ENCODE measurements at regions of chr15 and their contacts with region 1.

Region 1: DNA sequence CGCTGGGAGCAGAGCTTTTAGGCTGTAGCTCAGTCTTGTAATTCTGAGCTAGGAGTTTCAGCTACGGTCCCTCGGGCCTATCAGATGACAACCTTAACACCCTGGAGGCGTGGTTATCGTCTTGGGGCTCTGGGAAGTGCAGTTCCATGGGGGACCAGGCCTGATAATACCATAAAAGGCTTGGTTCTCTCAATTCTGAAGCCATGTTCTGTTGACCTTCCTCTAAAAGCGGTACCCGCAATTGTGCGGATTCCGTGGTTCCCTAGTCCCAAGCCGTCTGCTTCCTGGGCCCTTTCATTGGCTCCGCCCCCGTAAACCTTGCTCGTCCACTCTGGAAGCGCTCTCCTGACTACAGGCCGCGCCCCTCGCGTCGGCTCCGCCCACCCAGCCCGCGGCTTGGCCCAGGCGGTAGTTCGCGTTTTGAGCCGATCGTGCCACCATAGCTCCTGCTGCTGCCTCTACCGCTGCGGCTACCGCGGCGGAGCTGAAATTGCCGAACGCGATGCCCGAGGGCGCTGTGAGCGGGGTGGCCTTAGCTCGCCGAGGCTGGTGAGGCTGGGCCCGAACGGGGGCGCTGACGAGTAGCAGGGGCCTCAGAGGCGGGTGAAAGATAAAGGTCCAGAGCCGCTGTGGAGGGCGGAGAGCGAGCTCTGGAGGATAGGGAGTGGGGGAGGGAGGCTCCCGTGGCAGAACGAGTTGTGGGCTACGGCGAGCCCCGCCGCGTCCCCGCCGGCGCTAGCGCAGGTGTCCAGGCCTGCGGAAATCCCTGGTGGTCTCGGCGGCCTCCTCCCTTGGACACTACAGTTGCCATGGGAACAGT is at the start of gene MAPKBP1:
- DNase-seq: peak; percentile 96 to 99 (median 98)
- ATAC-seq: peak; percentile 97
- H3K4me3 ChIP-seq: peak within 1 kb of the TSS; percentile 93
- H3K4me3 Mint-ChIP-seq: peak within 1 kb of the TSS; percentile 86 to 97 (median 95)
- H3K27ac ChIP-seq: peak within 1 kb of the TSS; percentile 73
- H3K27ac Mint-ChIP-seq: peak within 1 kb of the TSS; percentile 88 to 97 (median 94)
- H3K4me1 ChIP-seq: peaks cover 36% of the 10 kb centered on the region in 2 donors
- H3K4me1 Mint-ChIP-seq: peaks cover 33 to 65% (median 59%) of the 10 kb centered on the region in 7 donors
- H3K27me3 ChIP-seq: no peaks in the 10 kb centered on the region
- H3K27me3 Mint-ChIP-seq: no peaks in the 10 kb centered on the region
- total RNA-seq, gene MAPKBP1: 36.5 to 44.7 (median 41.1) TPM

Region 2: DNA sequence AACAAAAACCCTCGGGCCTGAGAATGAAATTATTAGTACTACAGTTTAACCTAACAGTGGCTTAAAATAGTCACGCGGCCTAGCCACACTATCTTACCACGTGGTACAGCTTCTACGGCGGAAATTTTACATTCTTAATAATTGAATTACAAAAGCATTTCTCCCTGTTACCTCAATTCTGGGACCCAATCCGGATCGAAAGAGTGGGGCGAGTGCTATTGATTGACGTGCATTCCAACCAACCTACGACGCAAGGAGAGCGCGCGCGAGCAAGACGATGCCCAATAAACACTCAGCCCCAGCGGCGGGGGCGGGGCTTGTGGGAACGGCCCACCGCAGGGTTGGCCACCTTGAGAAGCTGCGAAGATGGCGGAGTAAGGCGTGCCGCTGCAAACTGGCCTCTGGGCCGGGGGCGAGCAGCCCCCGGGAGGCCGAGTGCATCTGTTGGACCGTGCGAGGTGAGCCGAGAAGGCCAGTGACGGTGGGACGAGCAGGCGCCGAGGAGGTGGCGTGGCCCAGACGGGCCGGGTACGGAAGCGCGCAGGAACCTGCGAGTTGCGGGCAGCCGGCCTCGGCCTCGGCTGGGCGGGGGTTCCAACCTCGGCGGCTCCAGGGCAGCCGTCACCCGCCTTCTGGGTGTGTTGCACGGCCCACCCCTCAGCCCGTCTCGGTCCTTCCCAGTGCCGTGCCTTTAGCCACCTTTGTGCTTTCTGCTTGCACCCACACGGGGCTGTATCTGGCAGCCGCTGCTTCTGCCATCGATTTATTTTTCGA is 490.4 kb before region 1 on chr15:
- CTCF ChIA-PET with region 1: interaction called, 3 read pairs
- POLR2A ChIA-PET with region 1: no interaction called
- intact Hi-C with region 1: loop called in 1 of 2 experiments (anchors 5 kb)
- DNase-seq: peak; percentile 94 to 98 (median 97)
- ATAC-seq: peak; percentile 98
- H3K4me3 ChIP-seq: peak overlapping the region; percentile 89
- H3K4me3 Mint-ChIP-seq: peak overlapping the region; percentile 90 to 100 (median 92)
- H3K27ac ChIP-seq: peak overlapping the region; percentile 91
- H3K27ac Mint-ChIP-seq: peak overlapping the region; percentile 96 to 99 (median 97)
- H3K4me1 ChIP-seq: peaks cover 21 to 31% of the 10 kb centered on the region in 2 donors
- H3K4me1 Mint-ChIP-seq: peaks cover 22 to 54% (median 51%) of the 10 kb centered on the region in 7 donors
- H3K27me3 ChIP-seq: no peaks in the 10 kb centered on the region
- H3K27me3 Mint-ChIP-seq: peaks cover 0 to 2% (median 0%) of the 10 kb centered on the region in 5 donors

Region 3: DNA sequence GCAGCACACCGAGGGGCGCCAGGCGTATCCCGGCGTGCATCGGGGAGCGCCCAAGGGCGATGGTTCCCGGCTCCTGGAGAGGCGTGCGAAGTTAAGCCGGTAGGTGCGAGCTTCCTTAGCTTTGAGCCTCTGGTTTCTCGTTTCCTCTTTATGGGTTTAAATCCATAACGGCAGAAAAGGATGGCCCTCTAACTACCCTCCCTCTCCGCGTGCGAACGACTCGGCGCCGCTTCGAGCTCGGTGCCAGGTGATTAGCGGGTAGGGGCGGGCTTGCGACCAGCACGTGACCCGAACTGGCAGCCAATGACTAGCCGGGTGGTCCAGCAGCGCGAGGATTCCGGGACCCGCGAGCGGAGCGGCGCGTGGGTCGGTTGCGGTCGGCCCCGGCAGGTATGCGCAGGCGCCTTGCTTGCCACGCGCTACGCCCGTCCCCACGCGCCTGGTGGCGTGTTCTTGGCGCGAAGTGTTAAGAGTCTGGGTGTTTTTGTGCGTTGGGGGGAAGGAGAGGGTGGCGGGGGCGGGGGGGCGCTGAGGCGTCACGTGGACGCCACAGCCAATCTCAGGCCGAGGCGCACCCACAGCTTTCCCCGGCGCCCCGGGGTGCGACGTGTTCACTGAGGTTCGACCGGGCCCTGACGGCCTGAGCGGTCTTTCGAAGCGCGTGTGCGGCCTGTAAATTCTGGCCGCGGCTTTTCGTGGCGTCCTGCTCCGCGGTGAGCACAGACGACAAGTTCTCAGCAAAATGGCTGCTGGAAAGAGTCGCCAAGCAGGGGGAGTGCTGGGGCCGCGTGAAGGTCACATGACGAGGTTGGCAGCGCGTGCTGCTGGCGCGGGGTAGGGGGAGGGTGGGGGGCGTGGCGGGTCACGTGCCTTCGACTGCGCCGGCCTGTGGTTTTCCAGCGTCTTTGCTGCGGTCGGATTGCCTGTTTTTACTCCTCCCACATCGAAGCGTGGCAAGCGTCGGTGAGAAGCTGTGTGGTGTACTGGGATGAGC is 152.8 kb before region 1 on chr15:
- CTCF ChIA-PET with region 1: no interaction called
- POLR2A ChIA-PET with region 1: interaction called, 4 read pairs
- intact Hi-C with region 1: loop called in 1 of 2 experiments (anchors 1 kb)
- DNase-seq: peak; percentile 56 to 81 (median 78)
- ATAC-seq: peak; percentile 87
- H3K4me3 ChIP-seq: peak overlapping the region; percentile 67
- H3K4me3 Mint-ChIP-seq: peak overlapping the region; percentile 55 to 87 (median 78)
- H3K27ac ChIP-seq: peak overlapping the region; percentile 41
- H3K27ac Mint-ChIP-seq: peak overlapping the region; percentile 68 to 87 (median 77)
- H3K4me1 ChIP-seq: peaks cover 5 to 8% of the 10 kb centered on the region in 2 donors
- H3K4me1 Mint-ChIP-seq: peaks cover 5 to 29% (median 18%) of the 10 kb centered on the region in 7 donors
- H3K27me3 ChIP-seq: no peaks in the 10 kb centered on the region
- H3K27me3 Mint-ChIP-seq: peaks cover 0 to 29% (median 0%) of the 10 kb centered on the region in 5 donors

Region 4: DNA sequence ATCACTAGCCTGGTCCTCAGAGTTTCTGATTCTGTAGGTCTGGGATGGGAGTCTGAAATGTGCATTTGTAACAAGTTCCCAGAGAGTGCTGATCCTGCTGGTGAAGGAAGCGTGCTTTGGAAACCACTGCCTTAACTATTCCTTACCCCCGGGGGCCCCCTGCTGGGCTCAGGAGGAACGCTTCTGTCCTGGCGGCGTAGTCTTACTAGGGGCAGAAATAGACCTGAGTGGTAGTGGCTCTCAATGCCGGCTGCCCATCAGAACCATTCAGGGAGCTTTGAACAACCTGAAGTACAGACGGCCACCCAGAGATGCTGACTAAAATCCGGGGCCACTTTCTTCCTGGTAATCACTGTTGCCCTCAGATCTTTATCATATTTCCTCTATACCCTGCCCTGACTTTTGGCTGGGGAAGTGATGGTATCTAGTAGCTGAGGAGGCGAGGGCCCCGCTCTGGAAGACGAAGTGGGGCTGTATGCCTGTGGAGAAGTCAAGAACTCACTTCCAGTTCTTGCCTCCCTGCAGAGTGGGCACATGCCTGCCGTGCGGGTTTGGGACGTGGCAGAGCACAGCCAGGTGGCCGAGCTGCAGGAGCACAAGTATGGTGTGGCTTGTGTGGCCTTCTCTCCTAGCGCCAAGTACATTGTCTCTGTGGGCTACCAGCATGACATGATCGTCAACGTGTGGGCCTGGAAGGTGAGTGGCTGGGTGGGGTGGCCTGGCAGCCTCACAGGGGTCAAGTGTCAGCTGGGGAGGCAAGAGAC is 37.3 kb after region 1 on chr15:
- CTCF ChIA-PET with region 1: interaction called, 180 read pairs
- POLR2A ChIA-PET with region 1: interaction called, 13 read pairs
- intact Hi-C with region 1: loop called (anchors 1 kb)
- DNase-seq: peak; percentile 58 to 77 (median 72)
- ATAC-seq: peak; percentile 95
- H3K4me3 ChIP-seq: no peak overlapping the region
- H3K4me3 Mint-ChIP-seq: peak overlapping the region in 1 of 10 donors; percentile 30
- H3K27ac ChIP-seq: no peak overlapping the region
- H3K27ac Mint-ChIP-seq: peak overlapping the region in 1 of 9 donors; percentile 58
- H3K4me1 ChIP-seq: peaks cover 0 to 3% of the 10 kb centered on the region in 2 donors
- H3K4me1 Mint-ChIP-seq: peaks cover 8 to 28% (median 12%) of the 10 kb centered on the region in 7 donors
- H3K27me3 ChIP-seq: no peaks in the 10 kb centered on the region
- H3K27me3 Mint-ChIP-seq: no peaks in the 10 kb centered on the region

Region 5: GRCh38 chr15:41936649-41937567 is 162.6 kb after region 1 on chr15:
- CTCF ChIA-PET with region 1: interaction called, 40 read pairs
- POLR2A ChIA-PET with region 1: interaction called, 26 read pairs
- intact Hi-C with region 1: loop called (anchors 1 kb)
- DNase-seq: peak; percentile 39 to 85 (median 79)
- ATAC-seq: peak; percentile 86
- H3K4me3 ChIP-seq: peak overlapping the region; percentile 36
- H3K4me3 Mint-ChIP-seq: peak overlapping the region; percentile 63 to 89 (median 82)
- H3K27ac ChIP-seq: peak overlapping the region; percentile 83
- H3K27ac Mint-ChIP-seq: peak overlapping the region; percentile 93 to 100 (median 98)
- H3K4me1 ChIP-seq: peaks cover 50 to 53% of the 10 kb centered on the region in 2 donors
- H3K4me1 Mint-ChIP-seq: peaks cover 41 to 72% (median 65%) of the 10 kb centered on the region in 7 donors
- H3K27me3 ChIP-seq: no peaks in the 10 kb centered on the region
- H3K27me3 Mint-ChIP-seq: no peaks in the 10 kb centered on the region

Region 6: GRCh38 chr15:42273102-42273899 is 499.0 kb after region 1 on chr15 and contains the starts of genes GANC and TMEM87A:
- CTCF ChIA-PET with region 1: no interaction called
- POLR2A ChIA-PET with region 1: interaction called, 5 read pairs
- intact Hi-C with region 1: loop called in 1 of 2 experiments (anchors 1 kb)
- DNase-seq: peak; percentile 70 to 96 (median 94)
- ATAC-seq: peak; percentile 95
- H3K4me3 ChIP-seq: peak within 1 kb of the TSS; percentile 71
- H3K4me3 Mint-ChIP-seq: peak within 1 kb of the TSS; percentile 91 to 100 (median 97)
- H3K27ac ChIP-seq: peak within 1 kb of the TSS; percentile 94
- H3K27ac Mint-ChIP-seq: peak within 1 kb of the TSS; percentile 97 to 100 (median 100)
- H3K4me1 ChIP-seq: peaks cover 25 to 26% of the 10 kb centered on the region in 2 donors
- H3K4me1 Mint-ChIP-seq: peaks cover 30 to 76% (median 67%) of the 10 kb centered on the region in 7 donors
- H3K27me3 ChIP-seq: no peaks in the 10 kb centered on the region
- H3K27me3 Mint-ChIP-seq: no peaks in the 10 kb centered on the region
- total RNA-seq, gene GANC: 31.3 to 57.2 (median 45.4) TPM
- total RNA-seq, gene TMEM87A: 41.8 to 61.8 (median 53.7) TPM

Measured in naive thymus-derived CD4-positive, alpha-beta T cell (primary cell).